Upper lobe of right lung (tissue), 1 donor: ENCODE measurements at regions of chr11 and their contacts with region 1.

Region 1: DNA sequence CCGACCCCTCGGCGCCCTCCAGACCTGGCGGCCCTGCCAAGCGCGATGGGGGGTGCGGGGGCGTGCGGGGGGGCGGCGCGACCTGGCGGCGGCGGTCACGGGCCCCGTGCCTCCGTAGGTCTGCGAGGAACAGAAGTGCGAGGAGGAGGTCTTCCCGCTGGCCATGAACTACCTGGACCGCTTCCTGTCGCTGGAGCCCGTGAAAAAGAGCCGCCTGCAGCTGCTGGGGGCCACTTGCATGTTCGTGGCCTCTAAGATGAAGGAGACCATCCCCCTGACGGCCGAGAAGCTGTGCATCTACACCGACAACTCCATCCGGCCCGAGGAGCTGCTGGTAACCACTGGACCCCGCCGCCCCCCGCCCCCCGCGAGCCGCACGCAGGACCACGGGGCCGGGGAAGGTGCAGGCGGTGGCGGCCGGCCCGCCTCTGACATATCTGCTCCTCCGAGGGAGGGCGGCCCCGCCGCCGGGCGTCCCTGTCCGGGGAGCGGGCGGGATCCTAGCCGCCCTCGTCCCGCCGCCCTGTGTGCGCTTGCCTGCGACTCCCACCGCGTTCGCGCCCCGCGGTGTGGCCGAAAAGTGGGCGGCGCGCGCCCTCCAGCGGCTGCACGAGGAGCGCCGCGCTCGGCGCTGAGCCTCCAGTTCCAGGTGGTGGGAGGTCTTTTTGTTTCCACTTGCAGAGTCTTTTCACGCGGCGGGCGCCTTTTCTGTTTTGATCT is 2.1 kb downstream of the CCND1 start:
- DNase-seq: peak; percentile 91
- ATAC-seq: peak; percentile 72
- H3K4me3 ChIP-seq: peak overlapping the region; percentile 75
- H3K27ac ChIP-seq: peak overlapping the region; percentile 90
- H3K4me1 ChIP-seq: peaks cover 38% of the 10 kb centered on the region
- H3K27me3 ChIP-seq: peaks cover 6% of the 10 kb centered on the region
- CTCF ChIP-seq: peak; percentile 92

Region 2: GRCh38 chr11:69101115-69101791 is 541.8 kb before region 1 on chr11:
- intact Hi-C with region 1: loop called (anchors 5 kb)
- DNase-seq: peak; percentile 93
- ATAC-seq: peak; percentile 96
- H3K4me3 ChIP-seq: no peak overlapping the region
- H3K27ac ChIP-seq: no peak overlapping the region
- H3K4me1 ChIP-seq: peaks cover 9% of the 10 kb centered on the region
- H3K27me3 ChIP-seq: peaks cover 11% of the 10 kb centered on the region
- CTCF ChIP-seq: peak; percentile 100

Region 3: GRCh38 chr11:69296890-69297786 is 345.9 kb before region 1 on chr11:
- intact Hi-C with region 1: loop called (anchors 5 kb)
- DNase-seq: peak; percentile 96
- ATAC-seq: peak; percentile 63
- H3K4me3 ChIP-seq: peak overlapping the region; percentile 23
- H3K27ac ChIP-seq: peak overlapping the region; percentile 89
- H3K4me1 ChIP-seq: peaks cover 43% of the 10 kb centered on the region
- H3K27me3 ChIP-seq: no peaks in the 10 kb centered on the region
- CTCF ChIP-seq: no peak

Region 4: DNA sequence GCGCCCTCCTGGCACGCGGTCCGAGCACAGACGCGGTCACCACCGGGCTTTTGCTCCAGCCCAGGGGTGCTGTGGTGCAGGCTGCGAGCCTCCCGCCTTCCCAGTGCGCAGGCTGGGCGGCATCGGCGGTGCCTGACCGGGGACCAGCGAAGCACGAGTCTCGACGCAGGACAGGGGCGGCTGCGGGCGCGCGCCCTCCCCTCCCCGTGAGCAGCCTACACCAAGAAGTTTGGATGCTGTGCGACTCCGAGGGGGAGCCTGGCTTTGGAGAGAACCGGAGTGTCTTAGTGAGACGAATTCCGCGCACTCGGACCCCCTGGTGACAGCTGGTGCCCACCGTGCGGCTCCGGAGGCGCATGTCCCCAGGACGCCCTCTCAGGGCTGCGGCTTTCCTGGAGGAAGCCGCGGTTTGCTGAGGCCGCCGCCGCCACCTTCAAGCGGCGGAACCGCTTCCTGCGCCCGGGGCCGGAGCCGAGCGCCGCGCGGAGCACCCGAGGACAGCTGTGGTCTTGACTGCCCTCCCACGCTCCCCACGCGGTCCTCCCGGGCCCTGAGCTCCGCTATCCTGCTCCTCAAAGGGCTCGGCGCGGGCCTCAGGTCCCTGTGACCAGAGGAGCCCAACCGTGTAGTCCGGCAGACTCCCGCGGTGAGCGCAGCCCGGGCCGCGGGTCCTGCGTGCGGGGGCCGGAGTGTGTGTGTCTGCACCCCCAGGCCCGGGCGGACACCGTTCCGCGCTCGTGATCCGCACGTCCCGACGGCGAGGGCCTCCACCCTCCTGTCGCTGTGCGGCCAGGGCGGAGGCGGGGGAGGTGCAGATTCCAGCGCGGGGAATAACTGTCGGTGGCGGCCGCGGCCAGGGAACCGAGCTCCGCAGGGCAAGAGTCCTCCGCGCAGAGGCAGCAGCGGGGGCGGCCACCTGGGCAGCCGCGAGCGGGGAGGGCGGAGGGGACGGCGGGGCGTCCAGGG is 174.5 kb after region 1 on chr11:
- intact Hi-C with region 1: no loop called
- DNase-seq: no peak
- ATAC-seq: no peak
- H3K4me3 ChIP-seq: no peak overlapping the region
- H3K27ac ChIP-seq: no peak overlapping the region
- H3K4me1 ChIP-seq: no peaks in the 10 kb centered on the region
- H3K27me3 ChIP-seq: peaks cover 67% of the 10 kb centered on the region
- CTCF ChIP-seq: no peak